ENCODE measurements at regions of chr10 and their contacts with region 1.

Region 1: GRCh38 chr10:13536674-13537366 is 8.0 kb upstream of the BEND7 start:
- DNase-seq: peak; percentile 82
- H3K4me3 ChIP-seq: no peak overlapping the region
- H3K27ac ChIP-seq: no peak overlapping the region
- H3K4me1 ChIP-seq: peaks cover 0 to 4% of the 10 kb centered on the region in 2 experiments; a peak in 1 of 4 replicates
- H3K27me3 ChIP-seq: peaks cover 12% of the 10 kb centered on the region
- CTCF ChIP-seq: peak; percentile 59
- EP300 ChIP-seq: no peak
- RAD21 ChIP-seq: peak; percentile 75

Region 2: DNA sequence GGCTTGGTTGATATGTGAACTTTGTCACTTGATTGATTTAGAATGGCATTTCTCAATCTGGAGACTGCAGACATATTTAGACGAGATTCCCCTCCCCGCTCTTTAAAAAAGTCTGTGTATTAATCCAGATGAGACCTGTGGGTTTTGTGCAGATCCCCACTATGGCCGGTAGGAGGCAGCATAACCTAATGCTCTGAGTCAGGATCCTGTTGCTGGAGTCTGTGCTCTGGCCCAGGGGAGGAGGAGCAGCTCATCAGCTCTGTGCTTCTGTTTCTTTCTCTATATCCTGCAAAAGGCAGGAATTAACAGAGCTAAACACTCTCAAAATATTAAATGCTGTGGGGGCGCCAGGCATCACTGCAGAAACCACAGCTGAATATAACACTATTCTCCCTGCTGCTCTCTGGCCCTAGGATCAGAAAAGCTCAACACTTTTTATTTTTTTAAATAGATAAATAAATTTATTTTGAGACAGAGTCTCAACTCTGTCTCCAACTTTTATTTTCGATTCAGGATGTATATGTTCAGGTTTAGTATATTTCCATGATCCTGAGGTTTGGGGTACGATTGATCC is 164.8 kb before region 1 on chr10:
- CTCF ChIA-PET with region 1: interaction called, 30 read pairs
- POLR2A ChIA-PET with region 1: interaction called, 3 read pairs
- DNase-seq: peak; percentile 91
- H3K4me3 ChIP-seq: peak overlapping the region in 1 of 2 experiments; percentile 33; a peak in 1 of 4 replicates
- H3K27ac ChIP-seq: no peak overlapping the region
- H3K4me1 ChIP-seq: no peaks in the 10 kb centered on the region
- H3K27me3 ChIP-seq: no peaks in the 10 kb centered on the region
- CTCF ChIP-seq: peak; percentile 98
- EP300 ChIP-seq: no peak
- RAD21 ChIP-seq: peak; percentile 99

Region 3: DNA sequence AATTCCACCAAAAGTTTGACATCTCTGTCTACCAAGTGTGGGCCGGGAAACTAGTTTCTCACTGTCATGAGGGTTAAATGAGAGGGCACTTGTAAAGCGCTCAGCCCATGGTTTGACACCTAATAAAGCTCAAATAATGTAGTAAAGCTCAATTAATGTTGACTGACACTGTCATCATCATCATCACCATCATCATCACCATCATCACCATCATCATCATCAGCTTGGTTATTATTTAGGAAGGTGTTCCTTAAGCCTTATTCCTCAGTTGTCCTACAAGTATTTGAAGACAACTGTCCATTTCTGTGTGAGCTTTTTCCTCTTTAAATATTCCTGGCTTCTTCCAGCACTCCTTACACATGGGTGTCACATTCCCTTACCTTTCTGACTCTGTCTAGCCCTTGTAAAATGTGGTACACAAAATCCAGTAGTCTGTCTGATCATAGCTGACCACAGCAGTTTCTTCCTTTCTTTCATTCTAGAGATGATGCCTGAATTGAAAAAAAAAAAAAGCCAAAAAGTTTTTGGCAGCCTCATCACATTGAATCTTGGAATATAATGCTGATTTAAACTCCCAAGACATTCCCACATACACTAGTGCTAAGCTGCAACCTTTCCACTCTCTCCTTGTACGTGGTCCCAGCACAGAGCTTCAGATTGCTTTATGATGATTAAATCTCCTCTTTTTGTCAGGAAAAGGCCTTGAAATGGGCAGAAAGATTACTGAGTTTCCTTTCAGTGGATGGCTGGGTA is 148.2 kb before region 1 on chr10:
- CTCF ChIA-PET with region 1: interaction called, 10 read pairs
- POLR2A ChIA-PET with region 1: no interaction called
- DNase-seq: no peak
- H3K4me3 ChIP-seq: no peak overlapping the region
- H3K27ac ChIP-seq: no peak overlapping the region
- H3K4me1 ChIP-seq: no peaks in the 10 kb centered on the region; a peak in 1 of 4 replicates
- H3K27me3 ChIP-seq: peaks cover 15% of the 10 kb centered on the region
- CTCF ChIP-seq: no peak
- EP300 ChIP-seq: no peak
- RAD21 ChIP-seq: no peak

Region 4: DNA sequence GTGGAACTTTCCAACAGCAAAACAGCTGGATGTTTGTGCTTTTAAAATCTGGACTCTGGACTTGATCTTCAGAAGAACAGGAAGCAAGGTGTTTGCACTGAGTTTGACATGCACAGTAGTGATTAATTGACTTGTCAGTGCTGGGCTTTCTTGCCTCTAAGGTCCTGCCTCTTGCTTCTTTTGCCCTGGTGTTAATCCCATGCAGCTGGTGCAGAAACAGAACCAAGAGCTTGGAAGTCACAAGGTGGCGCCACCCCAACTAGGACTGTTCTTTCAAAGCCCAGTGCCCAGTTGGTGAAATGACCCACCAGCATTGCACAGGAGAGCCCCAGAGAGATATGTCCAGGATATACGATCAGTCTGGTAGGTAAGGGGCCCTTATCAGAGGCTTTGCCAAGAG is 121.9 kb before region 1 on chr10:
- CTCF ChIA-PET with region 1: interaction called, 14 read pairs
- POLR2A ChIA-PET with region 1: no interaction called
- DNase-seq: peak; percentile 36
- H3K4me3 ChIP-seq: no peak overlapping the region
- H3K27ac ChIP-seq: no peak overlapping the region
- H3K4me1 ChIP-seq: no peaks in the 10 kb centered on the region
- H3K27me3 ChIP-seq: no peaks in the 10 kb centered on the region
- CTCF ChIP-seq: peak; percentile 33; the same call in 1 of the 2 replicates
- EP300 ChIP-seq: no peak
- RAD21 ChIP-seq: peak; percentile 35

Region 5: DNA sequence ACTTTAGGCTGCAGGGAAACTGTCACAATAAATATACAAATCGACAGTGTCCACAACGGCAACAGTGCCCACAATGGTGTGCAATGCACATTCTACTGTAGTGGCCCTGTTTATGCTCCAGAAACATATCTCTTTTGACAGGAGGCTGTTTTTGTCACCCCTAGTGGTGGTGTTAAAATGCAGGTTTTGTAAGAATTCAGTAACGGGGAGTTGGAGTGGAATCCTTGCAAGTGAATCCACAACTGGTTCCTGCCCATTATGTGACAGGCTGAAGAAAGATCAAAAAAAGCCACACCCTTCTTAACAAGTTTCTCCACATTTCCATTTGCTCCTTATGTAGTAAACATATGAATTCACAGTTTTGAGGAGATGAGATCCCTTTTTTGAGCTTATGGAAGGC is 66.5 kb before region 1 on chr10:
- CTCF ChIA-PET with region 1: no interaction called
- POLR2A ChIA-PET with region 1: no interaction called
- DNase-seq: no peak
- H3K4me3 ChIP-seq: no peak overlapping the region
- H3K27ac ChIP-seq: no peak overlapping the region
- H3K4me1 ChIP-seq: no peaks in the 10 kb centered on the region
- H3K27me3 ChIP-seq: no peaks in the 10 kb centered on the region
- CTCF ChIP-seq: peak; percentile 21; the same call in 1 of the 2 replicates
- EP300 ChIP-seq: no peak
- RAD21 ChIP-seq: no peak

Region 6: GRCh38 chr10:13521026-13521425 is 15.8 kb before region 1 on chr10:
- CTCF ChIA-PET with region 1: interaction called, 17 read pairs
- POLR2A ChIA-PET with region 1: no interaction called
- DNase-seq: no peak
- H3K4me3 ChIP-seq: no peak overlapping the region
- H3K27ac ChIP-seq: no peak overlapping the region
- H3K4me1 ChIP-seq: peaks cover 0 to 10% of the 10 kb centered on the region in 2 experiments; a peak in 2 of 4 replicates
- H3K27me3 ChIP-seq: no peaks in the 10 kb centered on the region
- CTCF ChIP-seq: no peak
- EP300 ChIP-seq: no peak
- RAD21 ChIP-seq: no peak

Region 7: GRCh38 chr10:13586676-13587355 is 50.0 kb after region 1 on chr10 and contains the start of gene PRPF18:
- CTCF ChIA-PET with region 1: interaction called, 10 read pairs
- POLR2A ChIA-PET with region 1: interaction called, 4 read pairs
- DNase-seq: peak; percentile 92
- H3K4me3 ChIP-seq: peak within 1 kb of the TSS; percentile 85 to 98
- H3K27ac ChIP-seq: no peak within 1 kb of the TSS; a peak in 1 of 4 replicates
- H3K4me1 ChIP-seq: peaks cover 0 to 8% of the 10 kb centered on the region in 2 experiments; a peak in 2 of 4 replicates
- H3K27me3 ChIP-seq: no peaks in the 10 kb centered on the region; the same call in 1 of the 2 replicates
- CTCF ChIP-seq: peak; percentile 97
- EP300 ChIP-seq: no peak
- RAD21 ChIP-seq: peak; percentile 51
- polyA plus RNA-seq, gene PRPF18: 12.1 and 13.8 TPM in 2 replicates

Region 8: DNA sequence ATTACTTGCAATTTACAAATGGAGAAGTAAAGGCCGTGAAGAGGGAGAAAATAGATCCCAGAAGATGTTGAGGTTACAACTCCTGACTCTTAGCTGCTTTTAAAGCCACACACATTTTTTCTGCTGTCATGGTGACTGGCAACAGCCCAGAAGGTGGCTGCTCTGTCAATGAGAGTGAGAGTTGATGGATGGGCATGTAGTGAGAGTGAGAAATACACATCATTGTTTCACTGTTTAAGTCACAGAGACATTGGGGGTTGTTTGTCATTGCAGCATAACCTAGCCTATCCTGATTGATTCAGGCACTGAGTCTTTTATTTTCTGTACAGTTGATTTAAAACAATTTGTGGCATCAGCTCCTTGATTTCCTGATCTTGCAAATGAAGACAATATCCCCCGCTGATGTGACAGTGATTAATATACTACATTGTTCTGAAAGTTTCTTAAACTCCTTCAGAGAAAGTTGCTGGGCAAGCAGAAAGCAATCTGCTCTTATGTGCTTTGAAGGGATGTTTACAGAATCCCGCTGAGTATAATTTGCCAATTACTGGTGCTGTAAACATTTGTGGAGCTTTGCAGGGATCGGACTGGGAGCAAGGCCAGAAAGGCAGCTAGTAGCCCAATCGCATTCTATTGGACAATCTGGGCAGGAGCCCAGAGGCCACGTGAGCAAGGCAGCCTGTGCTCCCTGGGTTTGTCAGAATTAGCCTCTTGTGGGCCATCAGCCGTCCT is 279.5 kb after region 1 on chr10:
- CTCF ChIA-PET with region 1: no interaction called
- POLR2A ChIA-PET with region 1: no interaction called
- DNase-seq: no peak
- H3K4me3 ChIP-seq: no peak overlapping the region
- H3K27ac ChIP-seq: peak overlapping the region in 1 of 2 experiments; percentile 86; a peak in 2 of 4 replicates
- H3K4me1 ChIP-seq: peaks cover 0 to 8% of the 10 kb centered on the region in 2 experiments; a peak in 1 of 4 replicates
- H3K27me3 ChIP-seq: no peaks in the 10 kb centered on the region
- CTCF ChIP-seq: no peak
- EP300 ChIP-seq: no peak
- RAD21 ChIP-seq: no peak

Measured in SK-N-SH (cell line).